ENCODE measurements at regions of chr10 and their contacts with region 1.

Region 1: DNA sequence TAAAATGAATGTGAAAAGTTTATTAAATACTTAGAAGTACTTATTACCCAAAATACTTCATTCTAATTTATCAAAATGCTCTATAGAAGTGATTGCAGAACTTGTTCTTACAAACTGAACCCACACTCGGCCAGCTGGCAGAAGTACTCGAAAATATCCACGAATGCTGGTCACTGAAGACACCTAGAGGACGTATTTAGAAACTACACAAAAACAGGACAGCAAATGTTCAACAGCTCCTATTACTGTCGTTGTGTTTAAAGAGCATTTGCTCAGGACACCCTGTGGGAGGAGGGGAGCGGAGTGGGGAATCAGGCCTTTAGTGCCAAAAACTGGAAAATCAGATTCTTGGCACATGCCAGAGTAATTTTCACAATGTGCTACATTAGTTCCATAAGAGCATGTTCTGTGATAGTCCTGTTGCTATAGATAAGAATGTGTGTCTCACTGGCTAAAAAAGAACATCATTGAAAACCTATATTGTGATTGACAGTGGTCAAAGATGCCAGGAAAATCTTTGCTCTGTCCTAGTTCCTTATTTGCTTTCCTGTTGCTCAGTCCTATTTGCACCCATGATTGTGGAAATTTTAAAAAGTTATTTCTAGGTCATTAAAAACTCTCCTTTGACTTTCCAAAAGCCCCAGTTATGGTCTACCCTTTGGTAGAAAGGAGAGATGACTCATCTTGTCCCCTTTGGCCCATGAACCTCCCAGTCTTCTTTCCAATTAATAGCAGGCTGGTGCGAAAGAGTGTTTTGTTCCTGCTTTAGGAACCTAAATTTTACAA is 49.0 kb upstream of the NRBF2 start:
- DNase-seq: peak; percentile 29
- H3K4me3 ChIP-seq: no peak overlapping the region
- CTCF ChIP-seq: peak; percentile 60

Region 2: DNA sequence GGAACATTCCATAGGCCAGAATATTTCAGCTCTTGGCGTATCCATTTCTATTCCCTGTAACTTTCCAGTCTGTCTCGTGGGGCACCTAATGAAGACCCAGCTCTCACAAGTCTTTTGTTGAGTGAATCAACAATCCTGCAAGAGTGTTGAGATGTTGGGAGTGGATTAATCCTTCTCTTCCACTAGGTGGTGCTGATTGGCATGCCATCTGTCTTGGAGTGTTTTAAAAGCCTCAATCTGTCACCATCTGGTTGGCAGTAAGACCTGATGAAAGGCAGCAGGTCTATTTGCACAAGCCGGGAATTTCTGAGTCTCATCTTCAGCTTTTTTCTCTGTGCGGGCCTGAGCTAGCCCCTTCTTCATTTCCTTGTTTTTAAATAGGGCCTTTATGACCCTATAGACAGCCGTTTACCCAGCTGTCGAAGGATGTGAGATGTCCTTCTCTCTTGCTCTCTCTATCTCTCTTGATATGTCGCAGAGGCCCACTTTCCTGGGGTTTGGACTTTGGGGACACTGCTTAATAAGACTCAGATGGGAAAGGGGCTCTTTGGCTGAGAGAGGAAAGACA is 529.4 kb before region 1 on chr10:
- CTCF ChIA-PET with region 1: interaction called, 11 read pairs
- POLR2A ChIA-PET with region 1: no interaction called
- DNase-seq: peak; percentile 34
- H3K4me3 ChIP-seq: no peak overlapping the region
- CTCF ChIP-seq: peak; percentile 57

Region 3: DNA sequence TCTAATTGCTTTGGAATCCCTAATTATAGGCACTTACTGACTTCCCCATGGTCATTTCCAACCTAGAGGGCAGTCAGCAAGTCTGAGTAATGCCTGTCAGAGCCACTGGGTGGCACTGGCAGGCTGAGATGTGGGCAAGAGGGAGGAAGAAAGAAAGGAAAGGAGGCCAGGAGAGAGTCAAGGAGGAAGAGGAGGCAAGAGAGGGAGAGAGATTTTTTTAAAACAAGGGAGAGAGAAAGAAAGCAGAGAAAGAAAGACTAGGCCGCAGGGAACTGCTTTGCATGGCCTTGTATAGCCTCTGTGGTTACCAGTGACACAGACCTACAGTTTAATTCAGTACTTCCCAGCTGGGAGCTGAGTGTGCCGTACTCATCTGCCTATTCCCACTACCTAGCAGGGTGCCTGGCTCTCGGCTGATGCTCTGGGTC is 490.0 kb before region 1 on chr10:
- CTCF ChIA-PET with region 1: interaction called, 32 read pairs
- POLR2A ChIA-PET with region 1: no interaction called
- DNase-seq: no peak
- H3K4me3 ChIP-seq: no peak overlapping the region
- CTCF ChIP-seq: peak; percentile 93

Region 4: DNA sequence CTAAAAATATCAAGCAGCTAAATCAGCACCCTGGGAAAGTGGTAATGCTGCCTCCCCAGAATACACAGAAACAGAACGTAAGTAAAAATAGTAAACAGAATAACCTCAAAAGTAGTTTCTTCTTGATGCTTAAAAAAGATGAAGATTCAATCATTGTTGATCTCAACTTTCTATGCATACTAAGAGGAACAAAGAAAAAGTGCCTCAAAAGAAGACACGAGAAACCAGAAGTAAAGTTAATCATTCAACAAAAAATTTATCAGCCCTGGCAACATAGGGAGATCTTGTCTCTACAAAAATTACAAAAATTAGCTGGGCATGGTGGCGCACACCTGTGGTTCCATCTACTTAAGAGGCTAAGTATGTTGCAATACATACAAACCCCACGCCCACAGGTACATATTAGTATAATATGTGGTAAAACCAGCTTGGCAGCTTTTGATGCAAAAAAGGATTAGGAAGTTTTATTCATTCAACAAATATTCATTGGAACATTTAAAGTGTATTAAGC is 202.7 kb after region 1 on chr10:
- CTCF ChIA-PET with region 1: no interaction called
- POLR2A ChIA-PET with region 1: no interaction called
- DNase-seq: no peak
- H3K4me3 ChIP-seq: no peak overlapping the region
- CTCF ChIP-seq: no peak